ENCODE measurements at regions of chr6 and their contacts with region 1.

Region 1: GRCh38 chr6:1389369-1390132 is at the start of gene FOXF2:
- DNase-seq: no peak
- ATAC-seq: peak; percentile 12
- H3K4me3 ChIP-seq: no peak within 1 kb of the TSS
- H3K27ac ChIP-seq: no peak within 1 kb of the TSS
- H3K4me1 ChIP-seq: peaks cover 38% of the 10 kb centered on the region
- H3K27me3 ChIP-seq: peaks cover 0 to 38% of the 10 kb centered on the region in 2 donors
- CTCF ChIP-seq: no peak
- POLR2A ChIP-seq: no peak
- total RNA-seq, gene FOXF2: 0.26 TPM in 1 of 2 donors, not detected in the other

Region 2: DNA sequence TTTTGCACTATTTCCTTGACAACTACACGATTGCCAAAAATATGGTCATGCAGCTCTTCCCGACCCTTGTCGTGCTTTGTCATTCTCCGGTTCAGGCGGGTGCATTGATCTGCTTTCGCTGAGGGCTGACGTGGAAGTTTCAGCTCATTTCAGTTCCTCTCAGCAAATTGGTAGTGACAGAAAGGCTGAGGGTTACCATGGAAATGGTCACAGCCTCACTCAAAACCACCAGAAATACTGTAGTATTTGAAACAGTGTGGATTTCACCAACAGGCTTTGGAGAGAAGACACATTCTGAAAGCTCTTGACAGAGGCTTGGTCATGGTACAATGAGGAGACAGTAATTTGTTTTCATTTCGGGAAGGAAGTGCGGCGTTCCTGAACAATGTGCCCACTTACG is 596.9 kb before region 1 on chr6:
- intact Hi-C with region 1: loop called (anchors 5 kb)
- DNase-seq: no peak
- ATAC-seq: no peak
- H3K4me3 ChIP-seq: no peak overlapping the region
- H3K27ac ChIP-seq: no peak overlapping the region
- H3K4me1 ChIP-seq: no peaks in the 10 kb centered on the region
- H3K27me3 ChIP-seq: peaks cover 0 to under 1% of the 10 kb centered on the region in 2 donors
- CTCF ChIP-seq: no peak
- POLR2A ChIP-seq: no peak

Measured in body of pancreas (tissue), 4 donors.